ENCODE measurements at regions of chr6 and their contacts with region 1.

Region 1: GRCh38 chr6:30483677-30484279 is 5.5 kb upstream of the HLA-E start:
- DNase-seq: peak in 3 of 9 experiments; percentile 45 to 76 (median 68)
- ATAC-seq: no peak
- H3K4me3 ChIP-seq: no peak overlapping the region
- H3K4me3 Mint-ChIP-seq: no peak overlapping the region
- H3K27ac ChIP-seq: no peak overlapping the region
- H3K27ac Mint-ChIP-seq: no peak overlapping the region
- H3K4me1 ChIP-seq: peaks cover 21% of the 10 kb centered on the region
- H3K4me1 Mint-ChIP-seq: peaks cover 34% of the 10 kb centered on the region
- H3K27me3 ChIP-seq: peaks cover 10 to 19% of the 10 kb centered on the region in 2 experiments
- H3K27me3 Mint-ChIP-seq: peaks cover 27% of the 10 kb centered on the region
- CTCF ChIP-seq: peak; percentile 91

Region 2: DNA sequence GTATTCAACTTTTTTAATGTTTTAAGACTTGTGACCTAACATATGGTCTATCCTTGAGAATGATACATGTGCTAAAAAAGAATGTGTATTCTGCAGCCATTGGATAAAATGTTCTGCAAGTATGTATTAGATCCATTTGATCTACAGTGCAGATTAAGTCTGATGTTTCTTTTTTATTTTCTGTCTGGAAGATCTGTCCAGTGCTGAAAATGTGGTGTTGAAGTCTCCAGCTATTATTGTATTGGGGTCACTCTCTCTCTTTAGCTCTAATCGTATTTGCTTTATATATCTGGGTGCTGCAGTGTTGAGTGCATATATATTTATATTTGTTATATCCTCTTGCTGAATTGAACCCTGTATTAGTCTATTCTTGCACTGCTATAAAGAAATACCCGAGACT is 201.3 kb before region 1 on chr6:
- CTCF ChIA-PET with region 1: no interaction called
- POLR2A ChIA-PET with region 1: no interaction called
- intact Hi-C with region 1: no loop called
- DNase-seq: no peak
- ATAC-seq: no peak
- H3K4me3 ChIP-seq: no peak overlapping the region
- H3K4me3 Mint-ChIP-seq: no peak overlapping the region
- H3K27ac ChIP-seq: no peak overlapping the region
- H3K27ac Mint-ChIP-seq: no peak overlapping the region
- H3K4me1 ChIP-seq: no peaks in the 10 kb centered on the region
- H3K4me1 Mint-ChIP-seq: no peaks in the 10 kb centered on the region
- H3K27me3 ChIP-seq: no peaks in the 10 kb centered on the region
- H3K27me3 Mint-ChIP-seq: no peaks in the 10 kb centered on the region
- CTCF ChIP-seq: no peak

Region 3: DNA sequence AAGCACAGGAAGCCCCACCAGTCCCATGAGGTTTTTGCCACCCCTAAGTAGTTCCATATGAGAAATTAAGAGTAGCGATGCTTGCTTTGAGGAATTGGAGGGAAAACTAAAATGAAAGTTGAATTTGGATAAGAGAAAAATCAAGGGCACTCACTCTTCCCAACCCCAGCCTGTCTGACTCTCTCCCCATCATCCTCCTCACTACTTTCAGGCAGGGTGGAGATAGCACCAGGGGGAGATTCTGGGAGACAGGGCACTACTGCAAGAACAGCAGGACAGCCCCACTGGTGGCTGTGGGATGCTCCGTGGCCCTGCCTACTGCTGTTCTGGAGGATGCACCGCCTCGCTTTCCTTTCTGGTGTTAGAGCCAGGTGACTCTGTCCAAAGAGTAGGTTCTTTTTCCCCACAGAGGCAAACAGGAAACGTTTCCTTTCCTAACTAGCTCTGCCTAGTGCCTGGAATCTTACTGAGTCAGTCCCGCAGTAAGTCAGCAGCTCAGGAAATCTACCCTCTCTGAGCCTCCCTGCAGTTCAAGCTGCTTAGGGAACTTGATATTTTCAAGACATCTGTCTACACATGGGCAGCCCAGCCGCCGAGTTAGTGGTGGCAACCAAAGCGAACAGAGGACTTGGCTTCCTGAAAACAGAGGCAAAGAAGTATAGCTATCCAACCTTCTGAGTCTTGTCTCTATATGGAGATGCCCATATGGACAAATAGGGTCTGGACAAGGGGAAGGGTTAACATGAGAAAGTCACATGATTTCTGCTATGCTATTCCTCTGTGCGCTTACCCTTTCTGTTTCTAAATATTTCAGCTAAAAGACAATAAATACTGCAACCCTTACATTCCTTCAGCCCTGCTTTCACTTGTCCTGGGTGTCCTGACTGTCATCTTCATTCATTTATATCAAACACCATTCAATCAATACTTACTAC is 16.9 kb after region 1 on chr6:
- CTCF ChIA-PET with region 1: interaction called, 18 read pairs
- POLR2A ChIA-PET with region 1: interaction called, 4 read pairs
- intact Hi-C with region 1: no loop called
- DNase-seq: peak in 1 of 9 experiments; percentile 30
- ATAC-seq: peak; percentile 55
- H3K4me3 ChIP-seq: peak overlapping the region; percentile 14 to 38
- H3K4me3 Mint-ChIP-seq: peak overlapping the region; percentile 80
- H3K27ac ChIP-seq: no peak overlapping the region
- H3K27ac Mint-ChIP-seq: peak overlapping the region; percentile 83
- H3K4me1 ChIP-seq: peaks cover 38% of the 10 kb centered on the region
- H3K4me1 Mint-ChIP-seq: peaks cover 42% of the 10 kb centered on the region
- H3K27me3 ChIP-seq: no peaks in the 10 kb centered on the region
- H3K27me3 Mint-ChIP-seq: no peaks in the 10 kb centered on the region
- CTCF ChIP-seq: no peak

Region 4: DNA sequence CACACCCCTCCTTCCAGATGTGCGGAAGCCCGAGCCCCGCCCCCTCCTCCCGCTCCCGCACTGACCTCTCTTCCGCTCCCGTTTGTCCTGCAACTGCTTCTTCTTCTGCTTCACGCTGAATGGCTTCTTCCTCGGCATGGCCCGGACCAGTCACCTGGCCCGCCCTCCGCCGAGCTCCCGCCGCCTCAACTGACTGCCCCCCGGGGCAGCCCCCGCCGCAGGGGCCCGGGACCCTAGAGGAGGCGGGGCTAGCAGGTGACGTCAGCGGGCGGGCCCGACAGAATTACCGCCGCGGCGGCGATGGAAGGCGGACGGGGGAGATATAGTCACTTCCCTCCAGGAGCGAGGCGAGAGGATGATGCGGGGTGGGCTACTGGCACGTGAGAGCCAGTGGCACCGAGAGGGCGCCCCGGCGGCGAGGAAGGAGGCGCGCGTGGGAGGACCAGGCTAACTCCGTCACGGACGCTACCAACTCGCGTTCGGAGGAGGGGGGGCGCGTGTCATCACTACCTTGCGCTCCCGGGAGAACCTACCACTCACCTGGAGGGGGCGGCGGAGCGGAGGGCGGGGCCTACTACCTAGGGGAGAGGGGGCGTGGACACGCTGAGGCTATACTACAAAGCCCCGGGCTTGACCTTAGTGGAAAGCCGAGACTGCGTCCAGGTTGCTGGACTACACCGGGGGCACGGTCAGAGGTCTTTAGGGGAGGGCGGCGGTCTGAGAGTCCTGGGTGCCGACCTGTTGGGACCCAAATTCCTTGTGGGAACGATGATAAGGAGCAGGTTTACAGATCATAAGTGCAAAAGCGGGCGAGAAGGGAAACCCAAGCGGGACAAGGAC is 72.5 kb after region 1 on chr6 and contains the start of gene GNL1:
- CTCF ChIA-PET with region 1: interaction called, 14 read pairs
- POLR2A ChIA-PET with region 1: interaction called, 4 read pairs
- intact Hi-C with region 1: no loop called
- DNase-seq: peak; percentile 97 to 100 (median 99)
- ATAC-seq: peak; percentile 90
- H3K4me3 ChIP-seq: peak within 1 kb of the TSS; percentile 75 to 92
- H3K4me3 Mint-ChIP-seq: peak within 1 kb of the TSS; percentile 95
- H3K27ac ChIP-seq: peak within 1 kb of the TSS; percentile 98 to 99
- H3K27ac Mint-ChIP-seq: peak within 1 kb of the TSS; percentile 99
- H3K4me1 ChIP-seq: peaks cover 25% of the 10 kb centered on the region
- H3K4me1 Mint-ChIP-seq: peaks cover 42% of the 10 kb centered on the region
- H3K27me3 ChIP-seq: no peaks in the 10 kb centered on the region
- H3K27me3 Mint-ChIP-seq: no peaks in the 10 kb centered on the region
- CTCF ChIP-seq: no peak
- total RNA-seq, gene GNL1: 148 to 159 TPM

Region 5: GRCh38 chr6:30583921-30584320 is 100.1 kb after region 1 on chr6:
- CTCF ChIA-PET with region 1: interaction called, 29 read pairs
- POLR2A ChIA-PET with region 1: interaction called, 3 read pairs
- intact Hi-C with region 1: no loop called
- DNase-seq: no peak
- ATAC-seq: no peak
- H3K4me3 ChIP-seq: no peak overlapping the region
- H3K4me3 Mint-ChIP-seq: no peak overlapping the region
- H3K27ac ChIP-seq: no peak overlapping the region
- H3K27ac Mint-ChIP-seq: no peak overlapping the region
- H3K4me1 ChIP-seq: no peaks in the 10 kb centered on the region
- H3K4me1 Mint-ChIP-seq: no peaks in the 10 kb centered on the region
- H3K27me3 ChIP-seq: no peaks in the 10 kb centered on the region
- H3K27me3 Mint-ChIP-seq: no peaks in the 10 kb centered on the region
- CTCF ChIP-seq: no peak

Region 6: DNA sequence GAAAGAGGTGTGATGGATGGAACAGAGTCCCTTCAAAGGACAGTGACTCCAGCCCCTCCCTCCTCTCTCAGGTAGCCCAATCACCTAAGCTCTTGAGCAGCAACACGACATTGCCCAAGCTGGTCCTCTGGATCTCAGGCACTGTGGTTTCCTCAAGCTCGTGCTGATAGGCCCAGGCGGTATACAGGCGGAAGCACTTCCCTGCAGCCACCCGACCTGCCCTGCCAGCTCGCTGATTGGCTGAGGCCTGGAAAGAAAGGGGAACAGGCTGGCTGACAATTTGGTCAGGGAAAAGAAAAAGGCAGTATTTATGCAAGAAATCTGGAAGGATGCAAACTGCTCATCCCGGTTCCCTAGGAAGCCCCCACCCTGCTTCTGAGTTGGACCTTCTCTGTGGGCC is 172.7 kb after region 1 on chr6:
- CTCF ChIA-PET with region 1: interaction called, 11 read pairs
- POLR2A ChIA-PET with region 1: no interaction called
- intact Hi-C with region 1: no loop called
- DNase-seq: no peak
- ATAC-seq: no peak
- H3K4me3 ChIP-seq: no peak overlapping the region
- H3K4me3 Mint-ChIP-seq: no peak overlapping the region
- H3K27ac ChIP-seq: no peak overlapping the region
- H3K27ac Mint-ChIP-seq: no peak overlapping the region
- H3K4me1 ChIP-seq: no peaks in the 10 kb centered on the region
- H3K4me1 Mint-ChIP-seq: no peaks in the 10 kb centered on the region
- H3K27me3 ChIP-seq: no peaks in the 10 kb centered on the region
- H3K27me3 Mint-ChIP-seq: no peaks in the 10 kb centered on the region
- CTCF ChIP-seq: no peak

Region 7: GRCh38 chr6:30717042-30717844 is 233.5 kb after region 1 on chr6 and contains the start of gene MDC1:
- CTCF ChIA-PET with region 1: interaction called, 11 read pairs
- POLR2A ChIA-PET with region 1: interaction called, 4 read pairs
- intact Hi-C with region 1: loop called (anchors 2 kb)
- DNase-seq: peak; percentile 97 to 100 (median 98)
- ATAC-seq: peak; percentile 72
- H3K4me3 ChIP-seq: peak within 1 kb of the TSS; percentile 69 to 70
- H3K4me3 Mint-ChIP-seq: peak within 1 kb of the TSS; percentile 92
- H3K27ac ChIP-seq: peak within 1 kb of the TSS; percentile 83 to 90
- H3K27ac Mint-ChIP-seq: peak within 1 kb of the TSS; percentile 99
- H3K4me1 ChIP-seq: peaks cover 23% of the 10 kb centered on the region
- H3K4me1 Mint-ChIP-seq: peaks cover 51% of the 10 kb centered on the region
- H3K27me3 ChIP-seq: no peaks in the 10 kb centered on the region
- H3K27me3 Mint-ChIP-seq: no peaks in the 10 kb centered on the region
- CTCF ChIP-seq: peak; percentile 47
- total RNA-seq, gene MDC1: 38.9 to 48.8 TPM

Measured in CD8-positive, alpha-beta T cell (primary cell).